Common myeloid progenitor, CD34-positive (primary cell): ENCODE measurements at regions of chr19 and their contacts with region 1.

Region 1: DNA sequence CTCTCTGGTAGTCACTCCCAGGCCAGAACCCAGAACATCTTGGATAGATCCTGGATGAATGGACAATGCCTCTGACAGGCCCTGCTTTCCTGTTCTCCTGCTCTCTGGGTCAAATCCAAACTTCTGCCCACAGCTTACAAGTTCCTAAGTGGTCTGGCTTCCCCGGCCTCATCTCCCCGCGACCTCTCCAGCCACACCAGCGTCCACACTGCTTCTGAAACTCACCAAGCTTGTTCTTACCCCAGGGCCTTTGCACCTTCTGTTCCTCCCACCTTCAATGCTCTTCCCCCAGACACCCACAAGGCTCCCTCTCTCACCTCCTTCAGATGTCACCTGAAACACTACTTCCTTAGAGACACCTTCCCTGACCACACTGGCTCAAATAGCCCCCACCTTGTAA is 3.5 kb downstream of the OLFM2 start:
- DNase-seq: no peak
- H3K4me3 ChIP-seq: no peak overlapping the region
- H3K27ac ChIP-seq: no peak overlapping the region
- H3K4me1 ChIP-seq: peaks cover 0 to 16% (median 9%) of the 10 kb centered on the region in 4 experiments
- H3K27me3 ChIP-seq: peaks cover 6 to 50% (median 22%) of the 10 kb centered on the region in 5 experiments

Region 2: DNA sequence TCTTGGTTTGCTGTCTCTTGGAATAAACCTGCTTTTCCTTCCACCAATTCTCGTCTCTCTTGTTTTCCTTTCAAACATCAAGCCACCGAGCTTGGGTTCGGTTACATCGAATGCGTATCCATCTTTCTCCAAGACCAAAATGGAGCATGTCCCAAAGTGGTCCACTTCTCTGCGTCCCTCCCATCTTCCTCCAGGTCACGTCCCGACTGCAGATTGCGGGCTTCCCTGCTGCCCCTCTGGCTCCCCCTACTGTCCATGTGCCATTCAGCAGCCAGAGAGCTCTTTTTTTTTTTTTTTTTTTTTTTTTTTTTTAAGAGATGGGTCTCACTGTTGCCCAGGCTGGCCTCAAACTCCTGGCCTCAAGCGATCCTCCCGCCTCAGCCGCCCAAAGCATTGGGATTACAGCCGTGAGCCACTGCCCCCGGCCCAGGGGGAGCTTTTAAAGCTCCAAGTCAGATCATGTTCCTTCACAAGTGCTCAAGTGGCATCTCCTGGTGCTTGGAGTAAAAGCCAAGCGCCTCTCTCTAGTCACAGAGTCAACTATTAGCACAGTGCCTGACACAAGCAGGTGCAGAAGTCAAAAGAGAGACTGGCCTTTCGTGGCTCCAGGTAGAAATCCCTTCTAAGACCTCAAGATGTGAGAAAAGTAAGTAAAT is 67.5 kb after region 1 on chr19:
- CTCF ChIA-PET with region 1: interaction called, 28 read pairs
- POLR2A ChIA-PET with region 1: no interaction called
- DNase-seq: peak; percentile 58 to 74 (median 68)
- H3K4me3 ChIP-seq: no peak overlapping the region
- H3K27ac ChIP-seq: no peak overlapping the region
- H3K4me1 ChIP-seq: no peaks in the 10 kb centered on the region
- H3K27me3 ChIP-seq: peaks cover 0 to 26% (median 2%) of the 10 kb centered on the region in 5 experiments

Region 3: GRCh38 chr19:10027158-10027693 is 94.4 kb after region 1 on chr19:
- CTCF ChIA-PET with region 1: interaction called, 36 read pairs
- POLR2A ChIA-PET with region 1: no interaction called
- DNase-seq: peak in 1 of 3 donors; percentile 20
- H3K4me3 ChIP-seq: peak overlapping the region in 1 of 7 experiments; percentile 33
- H3K27ac ChIP-seq: no peak overlapping the region
- H3K4me1 ChIP-seq: peaks cover 0 to 6% (median 2%) of the 10 kb centered on the region in 4 experiments
- H3K27me3 ChIP-seq: peaks cover 0 to 22% (median 3%) of the 10 kb centered on the region in 5 experiments